Transverse colon (tissue), 4 donors: ENCODE measurements at regions of chr18 and their contacts with region 1.

Region 1: GRCh38 chr18:43367895-43368294 is 90.6 kb upstream of the SYT4 start:
- DNase-seq: no peak
- H3K4me3 ChIP-seq: no peak overlapping the region
- H3K27ac ChIP-seq: no peak overlapping the region
- H3K4me1 ChIP-seq: no peaks in the 10 kb centered on the region
- H3K27me3 ChIP-seq: no peaks in the 10 kb centered on the region
- CTCF ChIP-seq: no peak
- EP300 ChIP-seq: no peak
- POLR2A ChIP-seq: no peak

Region 2: GRCh38 chr18:42446195-42446594 is 921.7 kb before region 1 on chr18:
- in situ Hi-C with region 1: no loop called
- intact Hi-C with region 1: loop called (anchors 5 kb)
- DNase-seq: no peak
- H3K4me3 ChIP-seq: no peak overlapping the region
- H3K27ac ChIP-seq: no peak overlapping the region
- H3K4me1 ChIP-seq: no peaks in the 10 kb centered on the region
- H3K27me3 ChIP-seq: no peaks in the 10 kb centered on the region
- CTCF ChIP-seq: no peak
- EP300 ChIP-seq: no peak
- POLR2A ChIP-seq: no peak